BJ (cell line): ENCODE measurements at regions of chr3 and their contacts with region 1.

Region 1: GRCh38 chr3:40179016-40179415 is 130.5 kb upstream of the EIF1B start:
- DNase-seq: peak; percentile 4
- H3K4me3 ChIP-seq: no peak overlapping the region
- H3K27me3 ChIP-seq: no peaks in the 10 kb centered on the region
- CTCF ChIP-seq: peak; percentile 77

Region 2: DNA sequence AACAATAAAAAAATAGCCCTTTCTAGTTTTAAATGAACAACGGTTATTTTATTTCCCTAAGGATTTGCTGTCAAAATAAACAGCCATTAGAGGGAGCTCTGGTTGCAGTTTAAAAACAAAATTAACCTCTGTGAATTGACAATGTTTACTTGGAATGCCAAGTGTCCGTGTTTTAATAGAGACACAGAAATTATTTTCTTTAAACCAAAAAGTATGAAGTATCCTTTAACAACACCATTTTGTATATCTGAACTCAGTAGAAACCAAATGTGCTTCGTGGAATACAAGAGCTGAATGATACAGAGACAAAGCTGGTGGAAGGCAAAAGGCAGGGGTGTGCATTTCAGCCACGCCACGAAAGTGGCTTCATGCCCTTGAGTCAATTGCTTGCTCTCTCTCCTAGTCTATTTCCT is 637.1 kb before region 1 on chr3:
- CTCF ChIA-PET with region 1: interaction called, 45 read pairs
- POLR2A ChIA-PET with region 1: no interaction called
- DNase-seq: no peak
- H3K4me3 ChIP-seq: no peak overlapping the region
- H3K27me3 ChIP-seq: no peaks in the 10 kb centered on the region
- CTCF ChIP-seq: peak; percentile 57

Region 3: GRCh38 chr3:39668420-39668819 is 510.6 kb before region 1 on chr3:
- CTCF ChIA-PET with region 1: interaction called, 16 read pairs
- POLR2A ChIA-PET with region 1: no interaction called
- DNase-seq: no peak
- H3K4me3 ChIP-seq: no peak overlapping the region
- H3K27me3 ChIP-seq: no peaks in the 10 kb centered on the region; the same call in 1 of the 2 replicates
- CTCF ChIP-seq: peak; percentile 74

Region 4: GRCh38 chr3:39724233-39724846 is 454.7 kb before region 1 on chr3:
- CTCF ChIA-PET with region 1: interaction called, 37 read pairs
- POLR2A ChIA-PET with region 1: no interaction called
- DNase-seq: no peak
- H3K4me3 ChIP-seq: no peak overlapping the region
- H3K27me3 ChIP-seq: no peaks in the 10 kb centered on the region; the same call in 1 of the 2 replicates
- CTCF ChIP-seq: no peak

Region 5: DNA sequence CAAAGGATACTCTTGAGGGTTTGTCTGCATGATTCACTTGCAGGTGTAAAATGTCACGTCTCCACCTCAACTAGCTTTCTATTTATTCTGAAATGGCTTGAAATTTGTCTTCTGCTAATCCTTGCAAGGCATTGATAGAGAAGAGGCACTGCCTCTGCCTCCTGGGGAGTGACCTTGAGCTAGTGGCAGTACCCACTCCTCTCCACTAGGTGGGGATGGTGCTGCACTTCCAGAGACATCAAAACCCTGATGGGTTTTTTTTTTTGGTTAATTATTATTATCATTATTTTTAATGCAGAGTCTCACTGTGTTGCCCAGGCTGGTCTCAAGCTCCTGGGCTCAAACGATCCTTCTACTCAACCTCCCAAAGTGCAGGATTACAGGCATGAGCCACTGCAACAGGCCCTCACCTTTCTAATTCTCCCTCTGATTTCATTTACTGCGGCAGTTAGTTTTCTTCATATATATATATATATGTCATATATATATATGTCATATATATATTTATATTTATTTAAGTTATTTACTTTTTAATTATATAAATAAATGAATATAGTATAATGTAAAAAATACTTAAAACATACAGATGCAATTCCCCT is 12.9 kb after region 1 on chr3:
- CTCF ChIA-PET with region 1: interaction called, 39 read pairs
- POLR2A ChIA-PET with region 1: no interaction called
- DNase-seq: no peak
- H3K4me3 ChIP-seq: no peak overlapping the region
- H3K27me3 ChIP-seq: no peaks in the 10 kb centered on the region
- CTCF ChIP-seq: peak; percentile 93

Region 6: GRCh38 chr3:41482134-41482533 is 1303.1 kb after region 1 on chr3:
- CTCF ChIA-PET with region 1: no interaction called
- POLR2A ChIA-PET with region 1: no interaction called
- DNase-seq: no peak
- H3K4me3 ChIP-seq: no peak overlapping the region
- H3K27me3 ChIP-seq: no peaks in the 10 kb centered on the region
- CTCF ChIP-seq: no peak